ENCODE measurements at regions of chr1 and their contacts with region 1.

Region 1: GRCh38 chr1:42913426-42914091 is 45.1 kb downstream of the SLC2A1 start:
- DNase-seq: peak; percentile 74
- H3K4me3 Mint-ChIP-seq: no peak overlapping the region
- H3K27ac Mint-ChIP-seq: no peak overlapping the region
- H3K4me1 Mint-ChIP-seq: peaks cover 13% of the 10 kb centered on the region
- H3K27me3 Mint-ChIP-seq: no peaks in the 10 kb centered on the region
- CTCF ChIP-seq: peak; percentile 81

Region 2: GRCh38 chr1:42620307-42620706 is 293.3 kb before region 1 on chr1:
- CTCF ChIA-PET with region 1: no interaction called
- intact Hi-C with region 1: no loop called
- DNase-seq: no peak
- H3K4me3 Mint-ChIP-seq: no peak overlapping the region
- H3K27ac Mint-ChIP-seq: no peak overlapping the region
- H3K4me1 Mint-ChIP-seq: no peaks in the 10 kb centered on the region
- H3K27me3 Mint-ChIP-seq: peaks cover 15% of the 10 kb centered on the region
- CTCF ChIP-seq: no peak

Region 3: DNA sequence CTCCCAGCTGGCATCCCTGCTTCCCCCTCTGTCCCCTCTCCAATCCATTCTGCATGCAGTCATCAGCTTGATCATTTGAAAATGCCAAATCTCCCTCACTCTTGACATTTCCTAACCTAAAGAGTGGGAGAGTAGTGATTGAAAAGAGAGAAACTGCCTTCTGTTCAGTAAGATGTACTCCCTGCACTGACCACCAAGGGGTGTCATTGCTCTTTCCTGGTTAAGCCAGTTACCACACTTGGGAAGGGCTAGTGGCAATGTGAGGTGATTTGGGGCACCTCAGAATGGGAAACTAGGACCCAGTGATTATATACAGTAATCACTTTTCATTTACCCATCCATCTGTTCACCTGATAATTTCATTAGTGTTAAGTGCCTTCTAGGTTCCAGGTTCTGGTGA is 135.7 kb before region 1 on chr1:
- CTCF ChIA-PET with region 1: interaction called, 8 read pairs
- intact Hi-C with region 1: loop called (anchors 5 kb)
- DNase-seq: peak; percentile 34
- H3K4me3 Mint-ChIP-seq: no peak overlapping the region
- H3K27ac Mint-ChIP-seq: no peak overlapping the region
- H3K4me1 Mint-ChIP-seq: no peaks in the 10 kb centered on the region
- H3K27me3 Mint-ChIP-seq: no peaks in the 10 kb centered on the region
- CTCF ChIP-seq: peak; percentile 71